B cell (primary cell): ENCODE measurements at regions of chr11 and their contacts with region 1.

Region 1: DNA sequence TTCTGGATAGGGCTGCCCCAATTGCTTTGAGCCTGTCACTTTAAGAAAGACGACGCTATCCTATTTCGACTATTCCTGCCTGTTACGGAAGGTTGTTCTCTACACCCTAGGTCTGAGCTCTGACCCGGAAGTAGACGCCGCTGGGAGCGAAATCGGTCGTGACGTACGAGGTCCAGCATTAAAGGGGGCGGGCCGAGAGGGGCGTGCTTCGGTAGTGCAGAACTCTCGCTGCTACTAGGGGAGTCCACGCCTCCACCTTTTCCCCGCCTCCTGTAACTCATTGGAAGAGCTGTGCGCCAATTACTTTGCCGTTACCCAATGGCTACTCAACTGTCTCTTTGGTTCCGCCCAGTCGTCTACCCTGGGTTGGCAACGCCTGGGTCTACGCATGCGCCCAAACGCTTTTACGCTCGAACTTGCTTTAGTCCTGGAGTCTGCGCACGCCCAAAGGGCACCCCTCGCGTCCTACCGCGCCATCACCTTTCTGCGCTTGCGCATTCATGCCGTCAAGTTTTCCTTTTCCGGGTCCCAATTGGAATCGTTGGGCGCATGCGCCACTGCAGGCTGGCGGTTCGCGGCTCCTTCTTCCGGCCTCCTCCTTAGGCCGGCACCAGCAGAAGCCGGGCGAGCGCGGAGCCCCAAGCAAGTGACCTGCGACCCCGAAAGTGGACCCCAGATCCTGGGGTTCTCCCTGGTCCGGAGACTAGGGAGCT is at the start of gene PCNX3:
- DNase-seq: peak; percentile 100
- ATAC-seq: peak; percentile 88
- H3K4me3 ChIP-seq: peak within 1 kb of the TSS; percentile 64 to 93 (median 88)
- H3K4me3 Mint-ChIP-seq: peak within 1 kb of the TSS; percentile 98
- H3K27ac ChIP-seq: peak within 1 kb of the TSS; percentile 85 to 89
- H3K27ac Mint-ChIP-seq: peak within 1 kb of the TSS; percentile 97
- H3K4me1 ChIP-seq: peaks cover 39 to 47% of the 10 kb centered on the region in 2 donors
- H3K4me1 Mint-ChIP-seq: peaks cover 49% of the 10 kb centered on the region
- H3K27me3 ChIP-seq: no peaks in the 10 kb centered on the region
- H3K27me3 Mint-ChIP-seq: no peaks in the 10 kb centered on the region
- CTCF ChIP-seq: no peak
- total RNA-seq, gene PCNX3: 61.4 and 61.5 TPM in 2 replicates

Region 2: GRCh38 chr11:65117216-65118096 is 497.9 kb before region 1 on chr11 and contains the start of gene ZNHIT2:
- CTCF ChIA-PET with region 1: no interaction called
- POLR2A ChIA-PET with region 1: no interaction called
- intact Hi-C with region 1: loop called (anchors 10 kb)
- DNase-seq: peak; percentile 100
- ATAC-seq: peak; percentile 74
- H3K4me3 ChIP-seq: peak within 1 kb of the TSS; percentile 0 to 80 (median 80)
- H3K4me3 Mint-ChIP-seq: peak within 1 kb of the TSS; percentile 91
- H3K27ac ChIP-seq: peak within 1 kb of the TSS; percentile 69 to 96
- H3K27ac Mint-ChIP-seq: peak within 1 kb of the TSS; percentile 91
- H3K4me1 ChIP-seq: peaks cover 38 to 60% of the 10 kb centered on the region in 2 donors
- H3K4me1 Mint-ChIP-seq: peaks cover 71% of the 10 kb centered on the region
- H3K27me3 ChIP-seq: no peaks in the 10 kb centered on the region
- H3K27me3 Mint-ChIP-seq: no peaks in the 10 kb centered on the region
- CTCF ChIP-seq: peak; percentile 92
- total RNA-seq, gene ZNHIT2: 14.1 and 14.5 TPM in 2 replicates

Region 3: DNA sequence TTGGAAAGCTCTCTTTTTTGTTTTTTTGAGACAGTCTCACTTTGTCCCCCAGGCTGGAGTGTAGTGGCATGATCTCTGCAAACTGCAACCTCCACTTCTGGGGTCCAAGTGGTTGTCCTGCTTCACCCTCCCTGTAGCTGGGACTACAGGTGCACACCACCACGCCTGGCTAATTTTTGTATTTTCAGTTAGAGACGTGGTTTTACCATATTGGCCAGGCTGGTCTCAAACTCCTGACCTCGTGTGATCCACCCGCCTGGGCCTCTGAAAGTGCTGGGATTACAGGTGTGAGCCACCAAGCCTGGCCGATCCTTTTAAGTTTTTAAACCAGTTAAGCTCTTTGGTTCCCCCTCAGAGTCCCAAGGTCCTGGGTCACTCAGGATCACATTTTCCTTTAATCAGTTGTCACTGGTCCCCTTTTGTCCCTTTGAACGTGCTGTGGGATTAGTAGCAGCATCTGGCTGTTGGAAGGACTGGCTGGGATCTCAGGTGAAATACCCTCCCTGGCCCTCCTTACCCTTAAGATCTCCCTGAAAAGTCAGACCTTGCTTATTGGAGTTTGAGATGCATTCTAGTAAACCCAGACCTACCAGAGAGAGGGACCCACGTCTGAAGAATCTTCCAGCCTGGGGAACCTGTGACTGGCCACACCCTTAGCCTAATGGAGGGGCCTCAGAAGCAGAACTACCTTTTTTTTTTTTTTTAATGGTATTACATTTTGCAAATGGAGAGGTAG is 108.4 kb before region 1 on chr11:
- CTCF ChIA-PET with region 1: no interaction called
- POLR2A ChIA-PET with region 1: no interaction called
- intact Hi-C with region 1: no loop called
- DNase-seq: peak; percentile 79
- ATAC-seq: peak; percentile 61
- H3K4me3 ChIP-seq: peak overlapping the region in 1 of 5 experiments; percentile 99
- H3K4me3 Mint-ChIP-seq: no peak overlapping the region
- H3K27ac ChIP-seq: peak overlapping the region; percentile 65 to 99
- H3K27ac Mint-ChIP-seq: peak overlapping the region; percentile 78
- H3K4me1 ChIP-seq: peaks cover 45 to 56% of the 10 kb centered on the region in 2 donors
- H3K4me1 Mint-ChIP-seq: peaks cover 56% of the 10 kb centered on the region
- H3K27me3 ChIP-seq: no peaks in the 10 kb centered on the region
- H3K27me3 Mint-ChIP-seq: no peaks in the 10 kb centered on the region
- CTCF ChIP-seq: no peak

Region 4: DNA sequence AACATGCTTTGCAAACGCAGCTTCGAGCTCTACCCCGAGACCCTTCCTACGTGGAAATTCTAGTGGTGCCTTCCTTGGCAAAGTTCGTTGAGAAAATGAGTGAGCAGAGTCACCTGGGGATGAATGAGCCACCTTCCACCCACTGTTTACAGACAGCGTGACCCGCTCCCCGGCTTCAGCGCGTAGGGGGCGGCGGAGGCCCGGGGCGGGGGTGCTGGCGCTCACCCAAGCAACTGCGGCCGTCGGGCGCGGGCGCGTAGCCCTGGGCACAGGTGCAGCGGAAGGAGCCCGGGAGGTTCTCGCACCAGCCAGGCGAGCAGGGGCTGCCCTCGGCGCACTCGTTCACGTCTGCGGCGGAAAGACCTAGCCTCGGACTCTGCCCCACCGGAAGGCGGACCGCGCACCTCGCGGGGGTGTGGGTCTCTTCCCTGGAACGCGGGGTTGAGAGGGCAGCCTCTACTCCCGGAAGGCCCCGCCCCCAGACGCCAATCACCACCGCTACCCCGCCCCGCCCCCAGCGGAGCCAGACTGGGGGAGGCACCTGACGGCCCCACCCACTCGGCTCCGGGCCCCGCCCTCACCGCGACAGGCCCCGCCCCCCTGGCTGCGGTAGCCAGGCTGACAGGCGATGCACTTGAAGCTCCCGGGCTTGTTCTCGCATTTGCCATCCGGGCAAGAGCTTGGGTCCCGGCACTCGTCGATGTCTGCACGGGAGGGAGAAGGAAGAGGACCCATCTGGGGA is 69.0 kb before region 1 on chr11:
- CTCF ChIA-PET with region 1: interaction called, 21 read pairs
- POLR2A ChIA-PET with region 1: interaction called, 5 read pairs
- intact Hi-C with region 1: loop called (anchors 1 kb)
- DNase-seq: peak; percentile 98
- ATAC-seq: peak; percentile 89
- H3K4me3 ChIP-seq: peak overlapping the region in 4 of 5 experiments; percentile 40 to 60 (median 52)
- H3K4me3 Mint-ChIP-seq: peak overlapping the region; percentile 89
- H3K27ac ChIP-seq: peak overlapping the region; percentile 79 to 93
- H3K27ac Mint-ChIP-seq: peak overlapping the region; percentile 93
- H3K4me1 ChIP-seq: peaks cover 34 to 50% of the 10 kb centered on the region in 2 donors
- H3K4me1 Mint-ChIP-seq: peaks cover 59% of the 10 kb centered on the region
- H3K27me3 ChIP-seq: no peaks in the 10 kb centered on the region
- H3K27me3 Mint-ChIP-seq: no peaks in the 10 kb centered on the region
- CTCF ChIP-seq: no peak

Region 5: DNA sequence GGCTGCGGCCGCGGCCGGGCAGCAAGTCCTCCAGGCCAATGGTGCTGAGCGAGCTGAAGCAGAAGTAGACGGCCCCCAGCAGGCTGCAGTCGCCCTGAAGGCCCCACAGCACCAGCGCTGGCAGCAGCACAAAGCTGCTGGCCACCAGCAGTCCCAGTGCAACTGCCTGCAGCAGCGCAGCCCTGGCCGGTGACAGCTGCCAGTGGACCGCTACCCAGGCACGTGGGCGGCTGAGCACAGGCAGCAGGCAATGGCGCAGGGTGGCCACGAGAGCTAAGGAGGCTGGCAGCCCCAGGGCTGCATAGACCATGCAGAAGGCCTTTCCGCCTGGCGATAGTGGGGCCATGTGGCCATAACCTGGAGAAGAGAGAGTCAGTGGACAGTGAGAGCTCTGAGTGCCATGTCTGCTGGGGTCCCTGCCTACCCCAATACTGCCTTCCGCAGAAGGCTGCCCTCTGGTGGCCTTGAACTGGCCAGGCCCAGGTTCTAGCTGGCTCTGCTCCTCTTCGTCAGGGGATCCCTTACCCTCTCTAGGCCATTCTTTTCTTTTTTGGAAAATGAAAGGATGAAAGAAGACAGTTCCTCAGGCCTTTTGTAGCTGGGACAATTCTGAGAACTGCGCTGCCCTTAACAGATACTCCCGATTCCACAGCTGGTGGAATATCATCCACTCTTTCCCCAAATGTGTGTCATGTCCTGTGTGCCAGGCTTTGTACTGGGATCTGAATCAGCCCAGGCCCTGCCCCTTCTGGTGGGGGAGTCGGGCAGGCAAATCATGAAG is 21.7 kb before region 1 on chr11:
- CTCF ChIA-PET with region 1: interaction called, 20 read pairs
- POLR2A ChIA-PET with region 1: interaction called, 7 read pairs
- intact Hi-C with region 1: loop called (anchors 1 kb)
- DNase-seq: peak; percentile 66
- ATAC-seq: peak; percentile 48
- H3K4me3 ChIP-seq: no peak overlapping the region
- H3K4me3 Mint-ChIP-seq: no peak overlapping the region
- H3K27ac ChIP-seq: no peak overlapping the region
- H3K27ac Mint-ChIP-seq: peak overlapping the region; percentile 46
- H3K4me1 ChIP-seq: peaks cover 14 to 30% of the 10 kb centered on the region in 2 donors
- H3K4me1 Mint-ChIP-seq: peaks cover 24% of the 10 kb centered on the region
- H3K27me3 ChIP-seq: no peaks in the 10 kb centered on the region
- H3K27me3 Mint-ChIP-seq: no peaks in the 10 kb centered on the region
- CTCF ChIP-seq: peak; percentile 74

Region 6: DNA sequence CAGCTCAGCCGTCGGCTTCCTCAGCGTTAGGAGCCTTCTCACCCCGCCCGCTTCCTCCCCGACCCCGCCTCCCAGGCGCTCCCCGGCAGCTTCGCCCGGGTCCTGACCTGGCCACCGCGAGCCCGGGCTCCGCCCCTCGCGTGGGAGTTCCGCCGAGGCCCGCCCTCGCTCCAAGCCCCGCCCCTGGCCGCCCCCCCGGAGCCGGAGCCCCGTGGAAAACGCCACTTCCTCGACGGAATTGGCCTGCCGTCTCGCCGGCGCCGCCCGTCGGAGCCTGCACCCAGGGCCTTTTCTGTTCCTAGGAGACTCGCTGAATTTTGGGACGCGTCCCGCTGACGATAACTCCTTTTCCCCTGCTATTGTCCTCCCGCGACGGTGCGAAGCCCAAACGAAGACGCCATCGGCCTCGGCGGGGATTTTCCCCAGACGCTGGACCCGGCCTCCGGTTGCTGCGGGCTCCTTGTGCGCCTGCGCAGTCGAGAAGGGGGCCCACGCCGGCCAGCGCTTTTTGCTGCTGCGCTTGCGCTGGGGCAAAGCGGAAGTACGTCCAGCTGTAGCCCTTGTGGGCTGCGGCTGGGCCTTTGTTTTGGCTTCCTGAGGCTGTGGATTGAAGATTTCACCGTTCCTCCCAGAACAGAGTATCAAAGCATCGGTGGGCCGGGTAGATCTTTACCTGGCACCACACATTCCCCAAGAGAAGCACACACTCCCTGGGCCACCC is 37.3 kb after region 1 on chr11:
- CTCF ChIA-PET with region 1: no interaction called
- POLR2A ChIA-PET with region 1: interaction called, 11 read pairs
- intact Hi-C with region 1: loop called (anchors 1 kb)
- DNase-seq: peak; percentile 98
- ATAC-seq: peak; percentile 89
- H3K4me3 ChIP-seq: peak overlapping the region; percentile 22 to 74 (median 69)
- H3K4me3 Mint-ChIP-seq: peak overlapping the region; percentile 96
- H3K27ac ChIP-seq: peak overlapping the region; percentile 90 to 93
- H3K27ac Mint-ChIP-seq: peak overlapping the region; percentile 98
- H3K4me1 ChIP-seq: peaks cover 22 to 44% of the 10 kb centered on the region in 2 donors
- H3K4me1 Mint-ChIP-seq: peaks cover 57% of the 10 kb centered on the region
- H3K27me3 ChIP-seq: no peaks in the 10 kb centered on the region
- H3K27me3 Mint-ChIP-seq: no peaks in the 10 kb centered on the region
- CTCF ChIP-seq: no peak

Region 7: DNA sequence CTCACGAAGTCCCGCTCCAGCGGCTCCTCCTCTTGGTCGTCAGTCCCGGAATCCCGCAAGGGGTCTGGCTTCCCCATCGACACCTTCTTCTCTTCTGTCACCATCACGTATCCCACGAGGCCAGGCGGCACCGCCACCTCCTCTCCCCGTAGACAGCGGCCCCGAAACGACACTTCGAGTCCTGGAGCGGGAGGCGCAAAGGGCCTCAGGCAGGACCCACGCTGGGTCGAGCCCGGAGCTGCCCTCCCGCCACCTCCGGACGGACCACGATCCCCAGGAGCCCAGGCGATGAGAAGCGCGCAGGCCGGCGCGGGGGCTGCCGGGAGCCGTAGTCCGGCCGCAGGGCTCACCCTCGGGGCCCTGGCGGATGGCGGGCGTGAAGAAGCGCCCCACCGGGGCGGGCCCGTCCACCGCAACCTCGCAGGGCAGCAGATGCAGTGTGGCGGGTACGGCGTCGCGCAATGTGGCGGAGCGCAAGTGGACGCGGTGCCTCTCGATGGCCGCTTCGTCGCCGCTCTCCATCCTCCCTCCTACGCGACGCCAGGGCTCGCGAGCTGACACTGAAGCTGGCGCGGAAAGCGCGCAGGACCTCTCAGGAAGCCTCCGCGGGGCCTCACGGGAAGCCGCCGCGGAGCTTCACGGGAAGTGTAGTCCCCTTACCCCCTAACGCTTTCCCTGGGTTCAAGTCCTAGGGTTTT is 105.0 kb after region 1 on chr11 and contains the start of gene RNASEH2C:
- CTCF ChIA-PET with region 1: no interaction called
- POLR2A ChIA-PET with region 1: interaction called, 4 read pairs
- intact Hi-C with region 1: loop called (anchors 1 kb)
- DNase-seq: peak; percentile 89
- ATAC-seq: peak; percentile 92
- H3K4me3 ChIP-seq: peak within 1 kb of the TSS; percentile 59 to 84 (median 74)
- H3K4me3 Mint-ChIP-seq: peak within 1 kb of the TSS; percentile 97
- H3K27ac ChIP-seq: peak within 1 kb of the TSS; percentile 59 to 73
- H3K27ac Mint-ChIP-seq: peak within 1 kb of the TSS; percentile 91
- H3K4me1 ChIP-seq: peaks cover 14 to 16% of the 10 kb centered on the region in 2 donors
- H3K4me1 Mint-ChIP-seq: peaks cover 35% of the 10 kb centered on the region
- H3K27me3 ChIP-seq: no peaks in the 10 kb centered on the region
- H3K27me3 Mint-ChIP-seq: no peaks in the 10 kb centered on the region
- CTCF ChIP-seq: no peak
- total RNA-seq, gene RNASEH2C: 75.3 and 81.6 TPM in 2 replicates

Region 8: DNA sequence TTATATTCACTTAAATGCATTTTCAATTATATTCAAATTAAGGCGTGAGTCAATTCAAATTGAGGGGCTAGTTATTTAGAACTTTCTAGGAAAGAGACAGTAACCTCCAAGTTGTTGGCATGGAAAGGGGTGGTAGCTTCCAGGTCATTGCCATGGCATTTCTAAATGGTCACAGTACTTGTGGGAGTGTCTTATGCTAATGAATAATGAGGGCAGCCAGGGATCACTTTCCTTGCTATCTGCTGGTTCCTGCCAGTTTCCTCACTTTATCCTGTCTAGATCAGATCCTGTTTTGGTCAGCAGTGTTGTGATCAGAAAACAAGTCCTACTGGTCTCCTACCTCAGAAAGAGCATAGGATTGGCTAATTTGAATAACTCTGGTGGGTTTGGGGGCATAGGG is 127.0 kb after region 1 on chr11:
- CTCF ChIA-PET with region 1: no interaction called
- POLR2A ChIA-PET with region 1: no interaction called
- intact Hi-C with region 1: no loop called
- DNase-seq: no peak
- ATAC-seq: no peak
- H3K4me3 ChIP-seq: no peak overlapping the region
- H3K4me3 Mint-ChIP-seq: no peak overlapping the region
- H3K27ac ChIP-seq: no peak overlapping the region
- H3K27ac Mint-ChIP-seq: no peak overlapping the region
- H3K4me1 ChIP-seq: peaks cover 0 to 5% of the 10 kb centered on the region in 2 donors
- H3K4me1 Mint-ChIP-seq: peaks cover 7% of the 10 kb centered on the region
- H3K27me3 ChIP-seq: peaks cover 0 to 7% (median 2%) of the 10 kb centered on the region in 4 experiments
- H3K27me3 Mint-ChIP-seq: peaks cover 27% of the 10 kb centered on the region
- CTCF ChIP-seq: no peak

Region 9: DNA sequence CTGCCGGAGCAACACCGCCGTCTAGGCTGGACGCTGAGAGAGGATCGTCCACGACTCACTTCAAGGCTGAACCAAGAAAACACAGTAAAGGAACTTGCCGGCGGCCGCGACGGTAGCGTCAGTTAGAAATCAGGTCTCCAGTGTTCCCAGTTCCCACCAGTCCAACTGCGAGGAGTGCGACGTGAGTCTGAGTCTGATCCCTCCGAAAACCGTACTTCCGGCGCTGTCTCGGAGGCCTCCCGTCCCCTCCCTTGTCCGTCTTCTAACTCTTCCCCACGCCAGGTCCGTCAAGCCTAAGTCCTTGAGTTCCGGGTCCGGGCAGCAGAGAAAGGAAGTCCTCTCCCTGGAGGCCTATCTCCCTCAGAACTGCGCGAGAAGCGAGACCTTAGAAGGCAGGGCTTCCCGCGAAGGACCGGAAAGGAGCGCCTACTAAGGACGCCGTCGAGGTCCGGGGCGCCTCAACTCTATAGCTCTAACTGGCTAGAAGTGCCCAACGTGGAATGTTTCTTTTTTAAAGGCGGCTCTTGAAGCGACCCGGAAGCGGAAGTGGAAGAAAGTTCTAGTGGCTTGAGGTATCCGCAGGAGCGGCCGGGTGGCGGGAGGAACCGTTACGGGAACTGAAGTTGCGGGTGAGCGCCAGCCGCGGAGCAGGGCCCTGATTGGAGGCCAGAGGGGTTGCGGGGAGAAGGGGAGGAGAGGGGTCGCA is 386.7 kb after region 1 on chr11 and contains the starts of genes BANF1 and EIF1AD:
- CTCF ChIA-PET with region 1: no interaction called
- POLR2A ChIA-PET with region 1: interaction called, 3 read pairs
- intact Hi-C with region 1: loop called (anchors 1 kb)
- DNase-seq: peak; percentile 98
- ATAC-seq: peak; percentile 80
- H3K4me3 ChIP-seq: peak within 1 kb of the TSS; percentile 75 to 100 (median 96)
- H3K4me3 Mint-ChIP-seq: peak within 1 kb of the TSS; percentile 98
- H3K27ac ChIP-seq: peak within 1 kb of the TSS; percentile 89 to 94
- H3K27ac Mint-ChIP-seq: peak within 1 kb of the TSS; percentile 99
- H3K4me1 ChIP-seq: peaks cover 16 to 25% of the 10 kb centered on the region in 2 donors
- H3K4me1 Mint-ChIP-seq: peaks cover 34% of the 10 kb centered on the region
- H3K27me3 ChIP-seq: no peaks in the 10 kb centered on the region
- H3K27me3 Mint-ChIP-seq: no peaks in the 10 kb centered on the region
- CTCF ChIP-seq: no peak
- total RNA-seq, gene BANF1: 99.3 and 99.5 TPM in 2 replicates
- total RNA-seq, gene EIF1AD: 61.0 and 65.2 TPM in 2 replicates